ENCODE measurements at regions of chr1 and their contacts with region 1.

Region 1: GRCh38 chr1:204806943-204807687 is 63.5 kb upstream of the NFASC start:
- DNase-seq: no peak
- H3K4me3 ChIP-seq: peak overlapping the region; percentile 31 to 74 (median 72)
- H3K27ac ChIP-seq: no peak overlapping the region
- H3K4me1 ChIP-seq: no peaks in the 10 kb centered on the region
- H3K27me3 ChIP-seq: no peaks in the 10 kb centered on the region
- CTCF ChIP-seq: peak; percentile 93 to 99 (median 99)

Region 2: GRCh38 chr1:204971517-204972336 is 164.6 kb after region 1 on chr1:
- dilution Hi-C with region 1: loop called (anchors 25 kb)
- DNase-seq: peak; percentile 11
- H3K4me3 ChIP-seq: no peak overlapping the region
- H3K27ac ChIP-seq: no peak overlapping the region
- H3K4me1 ChIP-seq: no peaks in the 10 kb centered on the region
- H3K27me3 ChIP-seq: no peaks in the 10 kb centered on the region
- CTCF ChIP-seq: no peak

Measured in keratinocyte (primary cell).